ENCODE measurements at regions of chr7 and their contacts with region 1.

Region 1: DNA sequence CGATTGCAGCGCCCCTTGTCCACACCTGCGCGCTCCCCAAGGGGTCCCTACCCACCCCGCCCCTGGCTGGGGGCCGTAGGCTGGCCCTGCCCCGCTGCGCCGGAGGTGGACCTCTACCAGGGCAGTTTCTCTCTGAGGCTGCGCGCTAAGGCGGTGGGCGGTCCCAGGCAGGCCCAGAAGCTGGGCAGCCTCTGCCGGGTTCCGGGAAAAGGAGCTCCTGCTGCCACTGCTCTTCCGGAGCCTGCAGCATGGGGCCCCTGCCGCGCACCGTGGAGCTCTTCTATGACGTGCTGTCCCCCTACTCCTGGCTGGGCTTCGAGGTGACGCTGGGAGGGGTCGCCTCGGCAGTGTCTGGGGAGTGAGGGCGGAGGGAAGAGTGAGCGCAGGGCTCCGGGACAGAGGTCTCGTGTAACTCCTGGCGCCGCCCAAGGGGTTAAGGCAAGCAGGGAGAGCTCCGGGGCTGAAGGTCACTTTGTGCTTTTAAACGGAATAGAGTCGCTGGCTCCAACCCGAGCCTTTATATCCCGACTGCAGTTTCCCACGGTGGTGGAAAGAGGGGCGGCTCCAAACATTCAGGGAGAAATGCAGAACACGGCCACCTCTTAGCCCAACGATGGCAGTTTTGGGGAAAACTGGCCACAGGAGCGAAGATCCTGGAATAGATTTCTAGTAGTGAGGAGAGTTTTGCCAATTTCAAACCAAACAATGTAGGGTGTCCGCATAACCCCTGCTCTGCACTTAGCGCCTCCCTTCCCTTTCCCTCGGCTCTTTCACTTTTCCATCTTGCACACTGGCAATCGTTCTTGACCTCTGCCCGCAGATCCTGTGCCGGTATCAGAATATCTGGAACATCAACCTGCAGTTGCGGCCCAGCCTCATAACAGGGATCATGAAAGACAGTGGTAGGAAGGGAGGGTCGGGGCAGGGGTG is at the start of gene GSTK1:
- DNase-seq: peak; percentile 77
- H3K4me3 Mint-ChIP-seq: peak within 1 kb of the TSS; percentile 98
- H3K27ac Mint-ChIP-seq: peak within 1 kb of the TSS; percentile 92
- H3K4me1 Mint-ChIP-seq: peaks cover 29% of the 10 kb centered on the region
- H3K27me3 Mint-ChIP-seq: no peaks in the 10 kb centered on the region
- CTCF ChIP-seq: no peak
- total RNA-seq, gene GSTK1: 69.7 and 79.9 TPM in 2 replicates

Region 2: GRCh38 chr7:143199040-143199439 is 64.5 kb before region 1 on chr7:
- CTCF ChIA-PET with region 1: no interaction called
- POLR2A ChIA-PET with region 1: no interaction called
- intact Hi-C with region 1: no loop called
- DNase-seq: no peak
- H3K4me3 Mint-ChIP-seq: no peak overlapping the region
- H3K27ac Mint-ChIP-seq: no peak overlapping the region
- H3K4me1 Mint-ChIP-seq: peaks cover 5% of the 10 kb centered on the region
- H3K27me3 Mint-ChIP-seq: peaks cover 32% of the 10 kb centered on the region
- CTCF ChIP-seq: no peak

Region 3: DNA sequence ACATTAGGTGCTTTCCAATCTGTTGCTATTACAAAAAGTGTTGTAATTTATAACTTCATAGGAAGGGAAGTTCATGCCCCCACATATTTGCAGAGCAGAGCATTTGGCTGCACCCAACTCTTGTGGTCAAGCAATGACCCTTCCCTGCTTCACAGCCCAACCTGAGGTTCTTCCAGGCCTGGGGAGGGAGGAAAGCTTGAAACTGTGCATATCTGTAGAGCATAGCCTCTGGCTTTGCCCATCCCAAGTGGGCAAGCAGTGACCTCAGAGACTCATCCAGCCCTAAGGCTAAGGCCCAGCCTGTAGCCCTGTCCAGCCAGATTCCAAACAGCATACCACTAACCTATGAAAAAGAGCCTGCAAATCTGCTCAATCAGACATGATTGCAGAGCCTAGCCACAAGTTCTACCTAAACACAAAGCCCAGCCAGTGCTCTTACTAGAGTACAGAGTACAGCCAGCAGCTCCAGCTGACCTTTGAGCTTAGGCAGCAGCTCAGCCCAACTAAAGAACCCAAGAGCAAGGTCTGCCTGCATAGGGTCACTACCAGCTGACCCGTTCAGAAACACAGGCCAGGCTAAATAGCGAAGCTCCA is 14.7 kb before region 1 on chr7:
- CTCF ChIA-PET with region 1: interaction called, 6 read pairs
- POLR2A ChIA-PET with region 1: interaction called, 11 read pairs
- intact Hi-C with region 1: no loop called
- DNase-seq: peak; percentile 6
- H3K4me3 Mint-ChIP-seq: no peak overlapping the region
- H3K27ac Mint-ChIP-seq: no peak overlapping the region
- H3K4me1 Mint-ChIP-seq: peaks cover 18% of the 10 kb centered on the region
- H3K27me3 Mint-ChIP-seq: no peaks in the 10 kb centered on the region
- CTCF ChIP-seq: no peak

Region 4: GRCh38 chr7:143287935-143288826 is 24.6 kb after region 1 on chr7 and contains the start of gene CASP2:
- CTCF ChIA-PET with region 1: interaction called, 5 read pairs
- POLR2A ChIA-PET with region 1: interaction called, 32 read pairs
- intact Hi-C with region 1: loop called (anchors 2 kb)
- DNase-seq: peak; percentile 97
- H3K4me3 Mint-ChIP-seq: peak within 1 kb of the TSS; percentile 98
- H3K27ac Mint-ChIP-seq: peak within 1 kb of the TSS; percentile 68
- H3K4me1 Mint-ChIP-seq: peaks cover 42% of the 10 kb centered on the region
- H3K27me3 Mint-ChIP-seq: no peaks in the 10 kb centered on the region
- CTCF ChIP-seq: no peak
- total RNA-seq, gene CASP2: 15.1 and 17.4 TPM in 2 replicates

Region 5: DNA sequence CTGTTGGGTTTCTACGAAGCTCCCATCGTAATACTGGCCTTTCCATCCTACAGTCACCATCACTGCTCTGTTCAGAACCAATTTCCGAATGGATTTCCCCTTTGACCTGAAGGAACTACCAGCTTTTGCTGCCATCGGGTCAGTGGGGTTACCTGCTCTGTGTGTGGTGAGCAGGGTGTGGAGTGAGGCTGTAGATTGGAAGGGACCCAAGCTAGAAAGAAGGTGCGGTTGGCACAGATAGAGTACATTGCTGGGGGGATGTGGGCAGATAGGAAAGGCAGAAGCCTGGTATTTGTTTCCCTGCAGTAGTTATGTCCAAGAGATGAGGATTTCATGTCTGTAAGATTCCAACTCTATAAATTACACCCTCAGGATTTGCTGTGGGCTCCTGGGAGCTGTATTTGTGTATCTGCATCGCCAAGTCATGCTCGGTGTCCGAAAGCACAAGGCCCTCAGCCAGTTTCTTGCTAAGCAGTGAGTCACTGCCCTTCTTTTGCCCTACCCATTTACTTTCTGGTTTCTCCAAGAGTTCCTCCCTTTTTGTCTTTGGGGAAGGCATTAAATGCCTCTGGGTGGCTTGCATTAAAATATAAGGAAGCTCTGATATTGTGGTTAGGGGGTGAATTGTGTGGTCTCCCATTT is 67.8 kb after region 1 on chr7:
- CTCF ChIA-PET with region 1: no interaction called
- POLR2A ChIA-PET with region 1: interaction called, 12 read pairs
- intact Hi-C with region 1: no loop called
- DNase-seq: peak; percentile 92
- H3K4me3 Mint-ChIP-seq: no peak overlapping the region
- H3K27ac Mint-ChIP-seq: peak overlapping the region; percentile 88
- H3K4me1 Mint-ChIP-seq: peaks cover 12% of the 10 kb centered on the region
- H3K27me3 Mint-ChIP-seq: no peaks in the 10 kb centered on the region
- CTCF ChIP-seq: no peak

Measured in MCF 10A (cell line).